Activated CD4-positive, alpha-beta T cell treated with anti-CD3 and anti-CD28 coated beads for 36 hours (primary cell): ENCODE measurements at regions of chr9 and their contacts with region 1.

Region 1: GRCh38 chr9:27333241-27334052 is 36.5 kb upstream of the EQTN start:
- DNase-seq: peak; percentile 51
- ATAC-seq: peak; percentile 68
- H3K4me3 Mint-ChIP-seq: no peak overlapping the region
- H3K27ac Mint-ChIP-seq: no peak overlapping the region
- H3K4me1 Mint-ChIP-seq: no peaks in the 10 kb centered on the region
- H3K27me3 Mint-ChIP-seq: peaks cover 2% of the 10 kb centered on the region

Region 2: DNA sequence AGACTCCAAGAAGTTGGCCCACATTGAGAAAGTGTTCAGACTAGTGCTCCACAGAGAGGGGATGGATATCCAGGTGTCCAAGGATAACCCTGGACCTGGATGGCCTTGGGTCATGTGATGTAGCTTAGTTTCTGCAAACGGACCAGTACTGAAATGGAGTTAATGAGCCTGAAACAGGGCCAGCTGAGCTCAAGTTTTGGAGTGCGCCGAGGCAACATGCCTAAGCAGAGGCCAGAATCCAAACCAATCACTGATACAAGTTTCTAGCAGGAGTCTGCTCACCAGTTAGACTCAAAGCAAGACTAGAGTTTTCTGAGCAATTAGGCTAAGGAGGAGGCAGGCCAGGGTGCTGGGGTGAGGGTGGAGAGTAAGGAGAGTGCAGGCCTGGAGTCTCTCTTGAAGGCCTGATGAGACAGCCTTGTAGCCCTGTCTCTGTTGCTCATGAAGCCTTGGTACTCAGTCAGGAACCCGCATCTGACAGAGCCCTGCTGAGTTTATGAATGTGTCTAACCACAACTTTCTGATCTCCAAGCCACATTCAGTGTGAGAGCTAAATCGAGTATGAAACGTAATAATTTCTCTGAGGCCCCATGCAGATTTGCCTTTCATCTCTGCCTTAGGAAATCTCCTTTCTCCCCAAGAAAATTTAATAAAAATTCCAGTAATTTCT is 32.4 kb after region 1 on chr9:
- CTCF ChIA-PET with region 1: interaction called, 13 read pairs
- POLR2A ChIA-PET with region 1: no interaction called
- intact Hi-C with region 1: no loop called
- DNase-seq: peak; percentile 82
- ATAC-seq: peak; percentile 99
- H3K4me3 Mint-ChIP-seq: peak overlapping the region; percentile 30
- H3K27ac Mint-ChIP-seq: peak overlapping the region; percentile 58
- H3K4me1 Mint-ChIP-seq: peaks cover 35% of the 10 kb centered on the region
- H3K27me3 Mint-ChIP-seq: peaks cover 15% of the 10 kb centered on the region

Region 3: GRCh38 chr9:27548055-27548741 is 214.8 kb after region 1 on chr9:
- CTCF ChIA-PET with region 1: interaction called, 32 read pairs
- POLR2A ChIA-PET with region 1: no interaction called
- intact Hi-C with region 1: loop called (anchors 1 kb)
- DNase-seq: no peak
- ATAC-seq: no peak
- H3K4me3 Mint-ChIP-seq: no peak overlapping the region
- H3K27ac Mint-ChIP-seq: no peak overlapping the region
- H3K4me1 Mint-ChIP-seq: no peaks in the 10 kb centered on the region
- H3K27me3 Mint-ChIP-seq: no peaks in the 10 kb centered on the region

Region 4: GRCh38 chr9:27600256-27600655 is 266.8 kb after region 1 on chr9:
- CTCF ChIA-PET with region 1: interaction called, 3 read pairs
- POLR2A ChIA-PET with region 1: no interaction called
- intact Hi-C with region 1: loop called in 1 of 2 experiments (anchors 5 kb)
- DNase-seq: no peak
- ATAC-seq: no peak
- H3K4me3 Mint-ChIP-seq: no peak overlapping the region
- H3K27ac Mint-ChIP-seq: no peak overlapping the region
- H3K4me1 Mint-ChIP-seq: no peaks in the 10 kb centered on the region
- H3K27me3 Mint-ChIP-seq: peaks cover 3% of the 10 kb centered on the region

Region 5: DNA sequence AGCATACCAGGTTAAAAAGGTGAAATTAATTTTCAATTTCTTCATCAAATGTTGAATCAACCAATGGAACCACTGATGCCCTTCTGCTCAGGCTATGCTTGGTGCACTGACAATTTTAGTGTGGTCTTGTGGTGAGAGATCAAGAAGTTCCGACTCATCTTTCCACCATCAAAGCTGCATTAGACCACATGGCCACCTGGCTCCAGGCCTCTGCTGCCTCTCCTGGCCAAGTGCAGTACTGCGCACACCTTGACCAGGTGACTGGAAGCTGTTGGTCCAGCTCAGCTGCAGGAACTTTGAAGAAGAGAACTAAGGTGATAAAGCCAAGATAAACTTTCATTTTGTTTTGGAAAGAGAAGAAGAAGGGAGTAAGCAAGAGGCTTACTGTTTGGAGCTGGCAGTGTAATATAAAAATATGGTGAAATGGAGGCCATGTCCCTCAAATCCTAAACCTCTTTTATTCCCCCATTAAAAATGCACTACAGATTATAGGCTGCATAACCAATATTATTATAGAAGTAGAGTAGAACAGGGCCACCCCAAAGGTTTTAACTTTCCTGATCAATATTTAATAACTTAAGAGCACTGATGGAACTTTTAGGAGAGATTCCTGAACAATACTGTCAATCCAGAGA is 555.3 kb after region 1 on chr9:
- CTCF ChIA-PET with region 1: no interaction called
- POLR2A ChIA-PET with region 1: no interaction called
- intact Hi-C with region 1: loop called in 1 of 2 experiments (anchors 10 kb)
- DNase-seq: peak; percentile 74
- ATAC-seq: peak; percentile 61
- H3K4me3 Mint-ChIP-seq: no peak overlapping the region
- H3K27ac Mint-ChIP-seq: no peak overlapping the region
- H3K4me1 Mint-ChIP-seq: no peaks in the 10 kb centered on the region
- H3K27me3 Mint-ChIP-seq: peaks cover 2% of the 10 kb centered on the region